HepG2 (cell line): ENCODE measurements at regions of chr9 and their contacts with region 1.

Region 1: GRCh38 chr9:126375386-126375785 is 48.8 kb downstream of the MVB12B start:
- DNase-seq: peak; percentile 20
- ATAC-seq: no peak
- H3K4me3 ChIP-seq: peak overlapping the region; percentile 39 to 65 (median 46)
- H3K27ac ChIP-seq: peak overlapping the region; percentile 86
- H3K4me1 ChIP-seq: peaks cover 97% of the 10 kb centered on the region
- H3K27me3 ChIP-seq: no peaks in the 10 kb centered on the region
- CTCF ChIP-seq: no peak
- EP300 ChIP-seq: no peak
- POLR2A ChIP-seq: no peak
- RAD21 ChIP-seq: no peak

Region 2: GRCh38 chr9:126326228-126327005 is 49.0 kb before region 1 on chr9 and contains the start of gene MVB12B:
- CTCF ChIA-PET with region 1: no interaction called
- POLR2A ChIA-PET with region 1: interaction called, 41 read pairs
- in situ Hi-C with region 1: no loop called
- intact Hi-C with region 1: no loop called
- DNase-seq: no peak
- ATAC-seq: peak; percentile 62
- H3K4me3 ChIP-seq: peak within 1 kb of the TSS; percentile 60 to 88 (median 80); a peak in 5 of 6 replicates
- H3K27ac ChIP-seq: peak within 1 kb of the TSS; percentile 62
- H3K4me1 ChIP-seq: peaks cover 47% of the 10 kb centered on the region
- H3K27me3 ChIP-seq: no peaks in the 10 kb centered on the region
- CTCF ChIP-seq: no peak
- EP300 ChIP-seq: no peak
- POLR2A ChIP-seq: no peak
- RAD21 ChIP-seq: no peak; the same call in 1 of the 2 replicates
- total RNA-seq, gene MVB12B: 26.0 and 30.1 TPM in 2 replicates

Region 3: GRCh38 chr9:126334721-126335621 is 40.4 kb before region 1 on chr9:
- CTCF ChIA-PET with region 1: no interaction called
- POLR2A ChIA-PET with region 1: interaction called, 101 read pairs
- in situ Hi-C with region 1: loop called (anchors 5 kb)
- intact Hi-C with region 1: loop called (anchors 1 kb)
- DNase-seq: peak; percentile 99
- ATAC-seq: peak; percentile 94
- H3K4me3 ChIP-seq: peak overlapping the region; percentile 64 to 82 (median 78); a peak in 5 of 6 replicates
- H3K27ac ChIP-seq: peak overlapping the region; percentile 85
- H3K4me1 ChIP-seq: peaks cover 95% of the 10 kb centered on the region
- H3K27me3 ChIP-seq: no peaks in the 10 kb centered on the region; a peak in 1 of 5 replicates
- CTCF ChIP-seq: peak; percentile 1; the same call in 1 of the 2 replicates
- EP300 ChIP-seq: peak; percentile 11 to 82; a peak in 3 of 4 replicates
- POLR2A ChIP-seq: peak; percentile 60 to 89
- RAD21 ChIP-seq: no peak

Region 4: GRCh38 chr9:126343271-126343711 is 32.1 kb before region 1 on chr9:
- CTCF ChIA-PET with region 1: no interaction called
- POLR2A ChIA-PET with region 1: interaction called, 101 read pairs
- in situ Hi-C with region 1: loop called (anchors 5 kb)
- intact Hi-C with region 1: no loop called
- DNase-seq: peak; percentile 84
- ATAC-seq: peak; percentile 74
- H3K4me3 ChIP-seq: peak overlapping the region in 1 of 3 experiments; percentile 6; a peak in 1 of 6 replicates
- H3K27ac ChIP-seq: peak overlapping the region; percentile 65
- H3K4me1 ChIP-seq: peaks cover 58% of the 10 kb centered on the region
- H3K27me3 ChIP-seq: no peaks in the 10 kb centered on the region
- CTCF ChIP-seq: no peak
- EP300 ChIP-seq: no peak
- POLR2A ChIP-seq: no peak
- RAD21 ChIP-seq: no peak